Activated T-helper 1 cell treated with anti-CD3 and anti-CD28 coated beads, Interleukin-12 subunit alpha, Interleukin-12 subunit beta, Interleukin-2, Interleukin-4 antibody, amounts not matched to agents 30 ng/mL and 10 ng/mL and 1 ng/mL, durations not matched to agents 14 hours and 24 hours and 36 hours (primary cell): ENCODE measurements at regions of chr17 and their contacts with region 1.

Region 1: DNA sequence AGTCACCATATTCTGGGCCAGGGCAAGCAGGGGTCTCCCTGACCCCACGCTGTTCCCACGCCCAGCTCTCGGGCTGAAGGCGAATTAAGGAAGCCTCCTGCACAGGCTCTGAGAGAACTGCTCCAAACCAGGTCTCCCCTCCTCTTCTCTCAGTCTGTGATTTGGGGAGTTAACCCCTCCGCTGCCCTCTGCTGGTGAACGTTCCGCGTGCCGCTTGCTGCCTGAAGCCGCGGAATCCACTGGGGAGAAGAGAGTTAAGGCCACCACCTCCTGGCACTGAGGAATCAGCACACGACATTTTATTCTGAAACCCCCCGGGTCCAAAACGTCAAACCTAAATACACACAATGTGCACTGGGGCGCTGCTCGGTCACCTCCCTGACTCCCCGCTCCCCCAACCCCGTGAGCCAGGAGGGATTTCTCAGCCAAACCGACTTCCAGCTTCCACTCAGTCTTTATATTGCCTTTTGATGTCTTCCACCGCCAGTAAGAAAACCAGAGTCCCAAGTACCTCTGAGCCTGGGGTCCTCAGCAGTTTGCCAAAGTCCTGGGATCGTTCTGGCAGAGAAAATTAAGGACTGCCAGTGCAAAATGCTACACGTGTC is 54.4 kb upstream of the RCVRN start:
- DNase-seq: no peak
- H3K4me3 Mint-ChIP-seq: no peak overlapping the region
- H3K27ac Mint-ChIP-seq: no peak overlapping the region
- H3K4me1 Mint-ChIP-seq: no peaks in the 10 kb centered on the region
- H3K27me3 Mint-ChIP-seq: no peaks in the 10 kb centered on the region

Region 2: DNA sequence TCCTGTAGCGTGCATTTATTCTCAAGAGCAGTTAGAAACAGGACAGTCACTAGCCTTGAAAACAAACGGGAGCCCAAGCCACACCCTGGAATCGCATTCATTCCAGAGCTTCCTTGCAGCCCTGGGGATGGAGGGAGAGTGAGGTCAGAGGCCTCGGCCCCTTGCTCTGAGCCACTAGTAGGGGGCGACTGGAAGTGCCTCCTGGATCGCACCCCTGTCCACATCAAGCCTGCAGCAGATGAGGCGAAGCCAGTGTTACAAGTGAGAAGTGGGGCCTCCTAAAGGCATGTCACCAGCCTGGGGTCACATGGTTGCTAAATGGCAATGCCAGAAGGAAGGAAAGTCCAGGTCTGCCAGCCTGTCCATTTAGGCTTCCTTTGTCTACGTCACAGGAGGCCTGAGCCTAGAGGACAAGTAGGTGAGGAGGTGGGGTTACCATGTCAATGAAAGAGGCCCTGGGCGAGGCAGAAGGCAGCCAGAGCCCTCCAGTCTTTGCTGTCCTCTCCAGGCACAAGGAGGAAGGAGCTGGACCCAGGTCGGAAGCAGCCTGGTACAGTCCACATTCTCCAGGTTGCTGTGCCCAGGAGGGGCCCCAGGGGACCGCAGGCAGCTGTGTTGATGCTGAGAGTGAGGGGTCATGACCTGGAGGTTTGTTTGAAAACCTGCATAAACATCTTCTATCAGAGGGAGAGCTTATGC is 51.4 kb before region 1 on chr17:
- intact Hi-C with region 1: no loop called
- DNase-seq: no peak
- H3K4me3 Mint-ChIP-seq: no peak overlapping the region
- H3K27ac Mint-ChIP-seq: no peak overlapping the region
- H3K4me1 Mint-ChIP-seq: no peaks in the 10 kb centered on the region
- H3K27me3 Mint-ChIP-seq: no peaks in the 10 kb centered on the region

Region 3: GRCh38 chr17:9948928-9949327 is 10.6 kb before region 1 on chr17:
- intact Hi-C with region 1: no loop called
- DNase-seq: no peak
- H3K4me3 Mint-ChIP-seq: no peak overlapping the region
- H3K27ac Mint-ChIP-seq: no peak overlapping the region
- H3K4me1 Mint-ChIP-seq: no peaks in the 10 kb centered on the region
- H3K27me3 Mint-ChIP-seq: peaks cover 1% of the 10 kb centered on the region

Region 4: GRCh38 chr17:10226930-10227685 is 267.6 kb after region 1 on chr17:
- intact Hi-C with region 1: loop called (anchors 2 kb)
- DNase-seq: peak; percentile 1
- H3K4me3 Mint-ChIP-seq: no peak overlapping the region
- H3K27ac Mint-ChIP-seq: no peak overlapping the region
- H3K4me1 Mint-ChIP-seq: no peaks in the 10 kb centered on the region
- H3K27me3 Mint-ChIP-seq: no peaks in the 10 kb centered on the region